ENCODE measurements at regions of chr6 and their contacts with region 1.

Region 1: DNA sequence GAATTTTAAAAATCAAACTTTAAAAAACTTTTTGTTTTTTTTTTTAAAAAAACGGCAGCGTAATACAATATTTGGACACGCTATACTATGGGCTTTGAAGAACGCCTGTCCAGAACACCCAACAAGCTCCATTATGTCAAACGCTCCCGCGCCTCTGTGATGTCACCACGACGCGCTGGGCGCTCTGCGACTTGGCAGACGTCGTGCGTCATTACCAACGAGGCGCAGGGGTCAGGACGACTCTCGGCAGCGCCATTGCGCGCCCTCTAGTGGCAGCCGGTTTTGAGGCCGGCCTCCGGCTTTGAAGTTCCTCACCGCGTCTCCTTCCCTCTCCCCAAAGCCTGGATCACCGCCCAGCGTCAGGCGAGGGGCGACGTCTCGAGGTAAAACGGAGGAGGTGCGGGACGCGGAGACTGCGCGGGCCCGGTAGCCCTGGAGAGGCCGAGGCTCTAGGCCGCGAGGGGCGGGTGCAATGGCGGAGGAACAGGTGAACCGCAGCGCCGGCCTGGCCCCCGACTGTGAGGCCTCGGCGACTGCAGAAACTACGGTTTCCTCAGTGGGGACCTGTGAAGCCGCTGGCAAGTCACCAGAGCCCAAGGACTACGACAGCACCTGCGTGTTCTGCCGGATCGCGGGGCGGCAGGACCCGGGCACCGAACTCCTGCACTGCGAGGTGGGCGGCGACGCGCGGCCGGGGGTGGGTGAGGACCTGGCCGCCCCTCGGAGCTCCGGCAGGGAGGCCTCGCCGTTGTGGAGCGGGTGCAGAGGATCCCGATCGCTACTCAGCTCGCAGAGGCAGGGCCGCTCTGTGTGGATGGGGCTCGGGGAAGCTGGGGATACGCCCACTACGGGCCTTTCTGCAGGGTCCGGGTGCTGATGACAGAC is at the start of gene HINT3:
- DNase-seq: peak; percentile 99
- ATAC-seq: peak; percentile 89
- H3K4me3 Mint-ChIP-seq: no peak within 1 kb of the TSS
- H3K27ac Mint-ChIP-seq: peak within 1 kb of the TSS; percentile 65
- H3K4me1 Mint-ChIP-seq: peaks cover 5% of the 10 kb centered on the region
- H3K27me3 Mint-ChIP-seq: peaks cover 6% of the 10 kb centered on the region
- total RNA-seq, gene HINT3: 5.4 to 8.1 TPM

Region 2: DNA sequence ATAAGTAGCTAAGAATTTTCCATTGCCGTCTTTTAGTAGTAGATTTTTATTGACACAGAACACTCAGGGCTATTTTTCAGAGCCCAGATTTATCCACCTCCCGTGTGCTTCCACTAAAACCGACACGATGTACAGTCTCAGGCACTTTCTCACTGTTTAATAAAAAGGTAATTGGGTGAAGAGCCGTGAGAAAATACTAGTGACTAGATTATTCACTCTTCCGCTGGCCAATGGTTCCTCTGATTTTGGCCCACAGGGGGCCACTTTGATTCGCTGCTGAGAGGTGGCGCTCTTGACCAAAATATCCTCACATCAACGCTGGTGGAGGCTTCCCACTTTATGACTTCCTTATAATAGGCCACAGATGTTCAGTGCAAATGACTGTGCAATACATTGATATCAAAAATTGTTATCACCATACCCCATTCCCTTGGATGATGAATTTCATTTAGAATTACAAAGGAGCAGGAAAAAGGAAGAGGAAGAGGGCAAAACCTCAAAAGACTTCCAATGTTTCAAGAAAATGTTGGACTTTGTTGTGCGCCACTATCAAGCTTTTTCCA is 642.6 kb before region 1 on chr6:
- CTCF ChIA-PET with region 1: interaction called, 4 read pairs
- POLR2A ChIA-PET with region 1: no interaction called
- intact Hi-C with region 1: loop called in 1 of 2 experiments (anchors 5 kb)
- DNase-seq: peak; percentile 62
- ATAC-seq: peak; percentile 74
- H3K4me3 Mint-ChIP-seq: no peak overlapping the region
- H3K27ac Mint-ChIP-seq: no peak overlapping the region
- H3K4me1 Mint-ChIP-seq: no peaks in the 10 kb centered on the region
- H3K27me3 Mint-ChIP-seq: peaks cover 2% of the 10 kb centered on the region

Region 3: DNA sequence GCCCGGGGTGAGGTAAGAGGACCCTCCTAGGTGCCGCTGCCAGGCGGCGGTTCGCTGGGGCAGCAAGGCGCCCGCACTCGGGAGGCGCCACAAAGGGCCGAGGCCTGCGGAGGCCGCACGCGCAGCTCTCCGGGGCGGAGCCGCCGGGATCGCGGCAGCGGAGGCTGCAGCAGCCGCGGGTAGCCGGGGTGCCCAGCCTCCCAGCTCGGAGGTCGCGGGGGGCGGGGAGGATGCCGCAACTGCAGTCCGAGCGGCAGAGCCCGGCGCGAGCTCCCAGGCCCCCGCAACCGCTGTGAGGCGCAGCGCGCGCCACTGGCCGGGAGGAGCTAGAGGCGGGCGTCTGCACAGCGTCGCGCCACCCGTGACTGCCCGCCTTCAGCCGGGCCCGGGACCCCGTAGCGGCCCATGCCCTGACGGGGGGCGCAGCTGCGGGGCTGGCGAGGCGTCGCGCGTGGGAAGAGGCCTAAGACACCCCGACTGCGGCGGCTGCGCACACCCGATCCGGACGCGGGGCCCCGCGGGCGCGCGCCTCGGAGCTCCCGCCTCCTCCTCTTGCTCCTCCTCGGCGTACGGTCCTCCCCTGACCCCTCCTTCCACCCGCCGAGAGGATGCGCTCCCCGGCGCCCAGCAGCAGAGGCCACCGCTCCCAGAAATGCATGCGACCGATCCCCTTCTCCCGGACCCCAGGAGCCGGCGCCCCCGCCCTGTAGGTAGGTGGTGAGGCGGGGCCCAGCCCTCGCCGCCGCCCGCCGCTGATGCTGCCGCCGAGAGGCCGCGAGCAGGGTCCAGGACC is 166.2 kb before region 1 on chr6 and contains the start of gene NCOA7:
- CTCF ChIA-PET with region 1: interaction called, 48 read pairs
- POLR2A ChIA-PET with region 1: interaction called, 22 read pairs
- intact Hi-C with region 1: loop called in 1 of 2 experiments (anchors 1 kb)
- DNase-seq: peak; percentile 89
- ATAC-seq: peak; percentile 76
- H3K4me3 Mint-ChIP-seq: peak within 1 kb of the TSS; percentile 96
- H3K27ac Mint-ChIP-seq: peak within 1 kb of the TSS; percentile 95
- H3K4me1 Mint-ChIP-seq: peaks cover 52% of the 10 kb centered on the region
- H3K27me3 Mint-ChIP-seq: no peaks in the 10 kb centered on the region
- total RNA-seq, gene NCOA7: 54.3 to 67.4 TPM

Region 4: DNA sequence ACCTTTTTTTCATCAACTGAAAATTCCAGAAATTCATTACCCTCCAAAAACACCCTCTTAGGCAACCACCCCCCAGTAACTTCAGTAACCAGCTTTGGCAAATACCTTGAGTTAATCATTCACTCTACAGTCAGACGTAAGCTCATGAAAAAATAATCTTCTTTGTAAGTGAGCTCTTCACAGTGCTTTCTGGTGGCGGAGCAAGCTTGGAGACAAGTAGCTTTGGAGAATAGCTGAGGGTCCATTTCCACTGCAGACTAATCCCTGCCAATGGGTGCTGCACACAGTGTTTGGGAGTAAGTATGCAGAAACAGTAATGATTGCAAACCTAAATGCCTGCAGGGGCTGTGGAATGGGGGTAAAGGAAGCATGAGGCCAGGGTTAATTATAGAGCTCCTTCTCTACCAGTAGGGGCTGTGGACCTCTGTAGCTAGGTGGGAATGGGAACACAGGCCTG is 57.0 kb before region 1 on chr6:
- CTCF ChIA-PET with region 1: interaction called, 26 read pairs
- POLR2A ChIA-PET with region 1: no interaction called
- intact Hi-C with region 1: loop called in 1 of 2 experiments (anchors 2 kb)
- DNase-seq: no peak
- ATAC-seq: no peak
- H3K4me3 Mint-ChIP-seq: no peak overlapping the region
- H3K27ac Mint-ChIP-seq: no peak overlapping the region
- H3K4me1 Mint-ChIP-seq: peaks cover 8% of the 10 kb centered on the region
- H3K27me3 Mint-ChIP-seq: no peaks in the 10 kb centered on the region

Region 5: DNA sequence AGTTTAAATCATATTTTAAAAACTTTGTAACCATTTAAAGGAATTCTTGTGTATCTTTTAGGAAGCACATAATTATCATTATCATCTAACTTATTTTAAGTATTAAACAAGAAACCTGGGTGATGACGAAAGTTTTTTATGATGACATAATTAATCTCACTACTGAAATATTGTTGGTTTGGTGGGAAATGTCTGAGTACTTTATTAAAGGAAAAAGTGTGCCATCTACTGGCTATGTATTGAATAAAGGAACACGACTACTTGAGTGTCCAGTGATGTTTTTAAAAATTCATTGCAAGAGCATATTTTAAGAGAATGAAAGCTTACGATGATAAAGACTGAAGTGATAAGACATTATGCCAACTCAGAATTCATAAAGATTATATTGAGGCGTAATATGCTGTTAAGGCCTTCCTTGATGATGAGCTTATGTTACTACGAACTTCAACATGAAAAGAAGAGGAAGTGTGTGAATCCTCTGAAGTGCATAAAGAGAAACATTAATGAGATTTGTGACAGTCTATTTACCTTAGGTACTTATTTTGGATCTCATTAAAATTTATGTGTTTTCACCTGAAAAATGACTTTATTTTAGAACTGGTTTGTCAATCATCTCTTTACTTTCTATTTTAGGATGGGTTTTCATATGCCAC is 17.6 kb after region 1 on chr6:
- CTCF ChIA-PET with region 1: interaction called, 23 read pairs
- POLR2A ChIA-PET with region 1: no interaction called
- intact Hi-C with region 1: loop called in 1 of 2 experiments (anchors 1 kb)
- DNase-seq: no peak
- ATAC-seq: peak; percentile 80
- H3K4me3 Mint-ChIP-seq: no peak overlapping the region
- H3K27ac Mint-ChIP-seq: peak overlapping the region; percentile 43
- H3K4me1 Mint-ChIP-seq: peaks cover 3% of the 10 kb centered on the region
- H3K27me3 Mint-ChIP-seq: no peaks in the 10 kb centered on the region

Measured in activated CD4-positive, alpha-beta T cell treated with anti-CD3 and anti-CD28 coated beads for 36 hours (primary cell).